ENCODE measurements at regions of chr10 and their contacts with region 1.

Region 1: GRCh38 chr10:30493609-30494530 is 59.9 kb downstream of the MAP3K8 start:
- DNase-seq: peak; percentile 99 to 100 (median 100)
- H3K4me3 ChIP-seq: peak overlapping the region; percentile 17 to 45 (median 24)
- H3K4me3 Mint-ChIP-seq: peak overlapping the region; percentile 74 to 89
- H3K27ac ChIP-seq: peak overlapping the region; percentile 96 to 99
- H3K27ac Mint-ChIP-seq: peak overlapping the region; percentile 97 to 100 (median 100)
- H3K4me1 ChIP-seq: peaks cover 92 to 96% of the 10 kb centered on the region in 2 donors
- H3K4me1 Mint-ChIP-seq: peaks cover 91% of the 10 kb centered on the region
- H3K27me3 ChIP-seq: no peaks in the 10 kb centered on the region
- H3K27me3 Mint-ChIP-seq: peaks cover 0 to 2% (median 1%) of the 10 kb centered on the region in 3 donors
- CTCF ChIP-seq: peak; percentile 49

Region 2: DNA sequence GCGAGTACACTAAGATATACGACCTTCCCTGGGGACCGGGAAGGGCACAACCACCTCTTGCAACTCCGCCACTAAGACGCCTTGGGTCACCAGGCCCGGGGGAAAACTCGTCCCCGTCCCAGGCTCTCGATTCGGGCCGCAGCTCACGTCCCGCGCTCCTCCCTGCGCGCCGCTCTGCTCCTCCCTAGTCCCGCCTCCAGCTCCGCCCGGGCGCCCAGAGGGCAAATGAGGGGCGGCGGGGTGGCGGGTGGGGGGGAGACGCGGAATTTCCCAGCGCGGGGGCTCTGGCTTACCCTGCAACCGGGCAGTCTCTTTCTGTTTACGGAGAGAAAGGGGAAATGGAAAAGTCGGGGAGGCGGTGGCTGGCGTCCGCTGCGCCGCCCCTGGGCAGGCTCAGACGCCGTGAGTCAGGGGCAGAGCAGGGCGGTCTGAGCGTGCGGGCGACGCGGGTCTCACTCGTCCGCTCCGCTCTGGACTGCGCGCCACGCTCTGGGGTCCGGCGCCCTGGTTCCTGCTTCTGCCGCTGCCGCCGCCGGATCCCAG is 60.1 kb before region 1 on chr10 and contains the start of gene MAP3K8:
- intact Hi-C with region 1: loop called (anchors 2 to 5 kb)
- DNase-seq: peak; percentile 96 to 98 (median 98)
- H3K4me3 ChIP-seq: peak within 1 kb of the TSS; percentile 96 to 100 (median 97)
- H3K4me3 Mint-ChIP-seq: peak within 1 kb of the TSS; percentile 98
- H3K27ac ChIP-seq: peak within 1 kb of the TSS; percentile 98 to 99
- H3K27ac Mint-ChIP-seq: peak within 1 kb of the TSS; percentile 95 to 99 (median 98)
- H3K4me1 ChIP-seq: peaks cover 64 to 71% of the 10 kb centered on the region in 2 donors
- H3K4me1 Mint-ChIP-seq: peaks cover 59% of the 10 kb centered on the region
- H3K27me3 ChIP-seq: no peaks in the 10 kb centered on the region
- H3K27me3 Mint-ChIP-seq: peaks cover 0 to 2% (median 0%) of the 10 kb centered on the region in 3 donors
- CTCF ChIP-seq: no peak
- polyA plus RNA-seq, gene MAP3K8: 54.5 to 206 (median 59.2) TPM

Region 3: DNA sequence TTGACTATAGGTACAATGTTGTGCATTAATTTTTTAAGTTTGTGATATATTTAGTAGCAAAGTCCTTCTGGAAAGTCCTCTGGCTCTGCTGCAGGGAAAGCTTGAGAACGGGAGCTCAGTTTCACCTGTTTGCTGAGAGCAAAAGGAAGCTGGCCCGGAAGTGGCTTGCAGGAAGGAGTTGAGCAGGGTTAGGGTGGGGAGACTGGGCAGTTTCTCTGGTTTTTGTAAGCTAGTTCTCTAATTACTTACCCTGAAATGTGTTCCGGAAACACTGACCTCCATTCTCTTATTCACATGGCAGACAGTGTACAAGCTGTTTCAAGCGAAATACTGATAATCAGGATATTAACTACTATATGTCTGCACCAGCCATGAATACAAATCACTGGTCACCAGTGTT is 37.6 kb before region 1 on chr10:
- intact Hi-C with region 1: loop called in 1 of 2 experiments (anchors 5 kb)
- DNase-seq: peak; percentile 40 to 54 (median 49)
- H3K4me3 ChIP-seq: peak overlapping the region in 1 of 3 experiments; percentile 29
- H3K4me3 Mint-ChIP-seq: peak overlapping the region; percentile 37 to 58
- H3K27ac ChIP-seq: peak overlapping the region; percentile 51 to 52
- H3K27ac Mint-ChIP-seq: peak overlapping the region; percentile 54 to 87 (median 75)
- H3K4me1 ChIP-seq: peaks cover 39 to 52% of the 10 kb centered on the region in 2 donors
- H3K4me1 Mint-ChIP-seq: peaks cover 53% of the 10 kb centered on the region
- H3K27me3 ChIP-seq: no peaks in the 10 kb centered on the region
- H3K27me3 Mint-ChIP-seq: peaks cover 0 to 2% (median 0%) of the 10 kb centered on the region in 3 donors
- CTCF ChIP-seq: no peak

Region 4: DNA sequence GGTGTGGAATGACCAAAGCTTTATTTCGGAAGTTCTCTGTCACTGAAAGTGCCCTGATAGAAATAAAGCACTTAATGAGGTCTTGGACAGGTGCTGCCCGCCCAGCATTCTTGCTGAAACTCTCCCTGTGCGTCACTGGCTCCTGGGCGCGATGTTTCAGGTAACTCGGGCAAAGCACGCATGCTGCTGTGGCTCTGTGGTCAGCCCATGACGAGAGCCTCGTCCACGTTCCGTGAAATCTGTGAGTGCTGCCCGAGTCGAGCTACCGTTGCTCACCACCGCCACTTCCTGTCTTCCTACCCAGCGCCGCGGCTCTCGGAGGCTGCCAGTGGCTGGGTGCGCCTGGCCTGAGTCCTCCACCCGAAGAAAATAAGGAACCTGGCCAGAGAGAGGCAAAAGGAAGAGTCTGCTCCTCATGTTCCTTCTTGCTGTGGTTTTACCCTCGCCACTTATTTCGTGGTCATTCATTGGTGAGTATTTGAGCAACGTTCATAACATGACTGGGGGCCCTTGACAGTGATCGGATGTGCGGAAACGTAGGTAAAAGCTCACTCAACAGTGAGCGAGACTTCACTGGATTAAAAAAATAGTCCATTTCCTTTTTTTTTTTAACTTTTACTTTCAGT is 35.6 kb after region 1 on chr10:
- intact Hi-C with region 1: loop called (anchors 1 to 5 kb)
- DNase-seq: peak; percentile 97 to 99 (median 98)
- H3K4me3 ChIP-seq: peak overlapping the region; percentile 22 to 59 (median 24)
- H3K4me3 Mint-ChIP-seq: peak overlapping the region; percentile 71 to 85
- H3K27ac ChIP-seq: peak overlapping the region; percentile 86 to 99
- H3K27ac Mint-ChIP-seq: peak overlapping the region; percentile 97 to 99 (median 98)
- H3K4me1 ChIP-seq: peaks cover 63 to 83% of the 10 kb centered on the region in 2 donors
- H3K4me1 Mint-ChIP-seq: peaks cover 68% of the 10 kb centered on the region
- H3K27me3 ChIP-seq: no peaks in the 10 kb centered on the region
- H3K27me3 Mint-ChIP-seq: peaks cover 0 to 2% (median 0%) of the 10 kb centered on the region in 3 donors
- CTCF ChIP-seq: no peak

Region 5: DNA sequence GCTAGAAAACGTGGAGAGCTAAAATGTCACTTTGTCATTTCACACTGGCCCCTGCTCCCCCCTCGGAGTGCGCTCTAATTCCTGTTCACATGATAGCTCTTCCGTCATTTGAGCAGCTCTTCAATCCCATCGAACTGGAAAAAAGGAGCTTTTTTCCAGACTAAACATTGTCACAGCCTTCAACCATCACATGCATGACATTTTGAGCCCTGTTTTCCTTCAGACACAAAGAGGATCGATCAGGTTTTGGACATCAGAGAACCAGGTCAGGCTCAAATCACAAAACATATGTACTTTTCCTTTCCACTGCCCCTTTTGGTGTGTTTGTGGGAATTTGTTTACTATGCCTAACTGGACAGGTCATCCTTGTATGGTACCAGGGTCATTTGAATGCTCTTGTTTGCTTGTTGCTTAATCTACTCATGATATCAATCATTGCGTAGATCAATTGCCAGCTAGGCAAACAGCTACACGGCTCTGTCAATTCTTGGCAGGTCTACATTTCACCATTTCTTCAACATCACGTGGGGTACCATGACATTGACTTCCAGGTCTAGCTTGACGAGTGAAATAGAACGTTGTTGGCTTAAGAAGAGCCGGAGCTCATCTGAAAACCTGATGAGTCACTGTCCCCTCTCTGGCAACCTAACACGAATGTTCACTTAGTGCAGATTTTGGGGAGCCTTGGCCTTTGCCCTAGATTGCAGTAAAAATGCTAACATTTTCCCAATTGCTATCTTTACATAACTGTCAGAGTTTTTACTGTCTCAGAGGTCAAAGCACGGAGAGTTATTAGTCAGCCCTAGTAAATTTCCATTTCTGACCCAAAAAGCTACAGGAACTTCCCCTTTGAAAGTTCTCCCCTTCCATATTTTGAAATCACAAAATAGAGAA is 48.4 kb after region 1 on chr10:
- intact Hi-C with region 1: no loop called
- DNase-seq: peak; percentile 92 to 99 (median 97)
- H3K4me3 ChIP-seq: peak overlapping the region in 1 of 3 experiments; percentile 36
- H3K4me3 Mint-ChIP-seq: peak overlapping the region; percentile 11 to 69
- H3K27ac ChIP-seq: peak overlapping the region; percentile 77 to 94
- H3K27ac Mint-ChIP-seq: peak overlapping the region; percentile 90 to 98 (median 93)
- H3K4me1 ChIP-seq: peaks cover 76 to 90% of the 10 kb centered on the region in 2 donors
- H3K4me1 Mint-ChIP-seq: peaks cover 76% of the 10 kb centered on the region
- H3K27me3 ChIP-seq: no peaks in the 10 kb centered on the region
- H3K27me3 Mint-ChIP-seq: peaks cover 0 to 2% (median 0%) of the 10 kb centered on the region in 3 donors
- CTCF ChIP-seq: no peak

Measured in CD14-positive monocyte (primary cell).